ENCODE measurements at regions of chr22 and their contacts with region 1.

Region 1: DNA sequence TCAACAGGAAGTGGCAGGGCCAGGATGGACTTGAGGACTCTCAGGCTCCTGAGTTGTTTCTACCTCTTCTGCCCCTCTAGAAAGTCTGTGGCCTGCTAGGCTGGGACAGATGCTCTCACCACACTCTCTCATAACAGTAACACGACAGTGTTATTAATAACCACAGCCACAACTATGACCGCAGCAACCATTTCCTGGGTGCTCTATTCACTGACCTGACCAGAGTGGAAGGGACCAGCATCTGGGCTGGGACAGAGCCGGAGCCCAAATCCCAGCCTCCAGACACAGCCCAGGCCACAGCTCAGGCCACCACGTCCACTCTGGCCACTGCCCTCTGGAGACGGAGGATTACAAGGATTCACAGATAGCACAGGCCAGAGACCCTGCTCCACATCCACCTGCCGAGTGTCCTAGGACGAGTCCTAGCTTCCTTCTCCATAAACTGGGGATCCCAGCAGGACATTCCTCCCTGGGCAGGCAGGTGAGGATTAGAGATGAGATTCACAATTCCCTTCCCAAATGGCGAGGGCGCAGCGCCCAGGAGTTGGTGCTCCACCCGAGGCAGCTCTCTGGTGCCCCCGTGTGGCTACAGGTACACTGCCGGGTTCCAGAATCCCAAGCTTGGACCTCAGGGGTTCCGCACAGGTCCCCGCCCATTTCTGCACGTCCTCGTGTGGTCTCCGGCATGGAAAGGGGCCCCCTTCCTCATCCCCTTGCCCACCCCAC is 7.0 kb downstream of the PNPLA5 start:
- DNase-seq: peak in 1 of 2 donors; percentile 56
- ATAC-seq: peak; percentile 34 to 61 (median 34)
- H3K4me3 ChIP-seq: no peak overlapping the region
- H3K4me3 Mint-ChIP-seq: peak overlapping the region; percentile 37
- H3K27ac ChIP-seq: no peak overlapping the region
- H3K27ac Mint-ChIP-seq: no peak overlapping the region
- H3K4me1 ChIP-seq: peaks cover 13% of the 10 kb centered on the region
- H3K4me1 Mint-ChIP-seq: peaks cover 12 to 26% of the 10 kb centered on the region in 2 donors
- H3K27me3 ChIP-seq: no peaks in the 10 kb centered on the region
- H3K27me3 Mint-ChIP-seq: peaks cover 20 to 22% of the 10 kb centered on the region in 2 donors
- CTCF ChIP-seq: peak; percentile 20

Region 2: DNA sequence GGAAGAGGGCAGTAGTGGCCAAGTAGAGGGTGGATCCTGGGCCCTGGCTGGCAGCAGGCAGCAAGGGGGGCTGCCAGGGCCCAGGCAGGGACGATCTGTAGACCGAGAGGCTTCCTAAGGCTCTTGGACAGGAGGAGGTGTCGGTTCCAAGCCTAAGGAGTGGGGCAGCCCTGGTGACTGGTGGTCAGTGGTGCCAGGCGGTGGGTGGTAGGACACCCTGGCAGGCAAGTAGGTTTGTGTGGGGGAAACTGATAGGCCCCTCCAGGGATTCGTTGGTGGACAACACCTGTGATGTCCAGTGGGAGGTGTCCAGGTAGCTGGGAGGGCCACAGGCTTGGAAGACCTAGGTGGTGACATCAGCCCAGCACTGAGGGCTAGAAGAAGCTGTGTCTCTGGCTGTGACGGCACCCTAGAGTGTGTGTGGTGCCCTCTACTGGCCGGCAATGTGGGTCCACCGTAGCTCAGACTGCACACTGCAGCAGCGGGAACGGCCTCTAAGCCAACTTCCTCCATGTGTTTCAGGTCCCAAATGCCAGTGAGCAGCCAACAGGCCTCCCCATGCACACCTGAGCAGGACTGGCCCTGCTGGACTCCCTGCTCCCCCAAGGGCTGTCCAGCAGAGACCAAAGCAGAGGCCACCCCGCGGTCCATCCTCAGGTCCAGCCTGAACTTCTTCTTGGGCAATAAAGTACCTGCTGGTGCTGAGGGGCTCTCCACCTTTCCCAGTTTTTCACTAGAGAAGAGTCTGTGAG is 61.0 kb after region 1 on chr22:
- intact Hi-C with region 1: loop called (anchors 5 kb)
- DNase-seq: peak; percentile 51 to 80
- ATAC-seq: peak; percentile 82 to 98 (median 96)
- H3K4me3 ChIP-seq: no peak overlapping the region
- H3K4me3 Mint-ChIP-seq: no peak overlapping the region
- H3K27ac ChIP-seq: no peak overlapping the region
- H3K27ac Mint-ChIP-seq: no peak overlapping the region
- H3K4me1 ChIP-seq: no peaks in the 10 kb centered on the region
- H3K4me1 Mint-ChIP-seq: no peaks in the 10 kb centered on the region
- H3K27me3 ChIP-seq: no peaks in the 10 kb centered on the region
- H3K27me3 Mint-ChIP-seq: peaks cover 12 to 13% of the 10 kb centered on the region in 2 donors
- CTCF ChIP-seq: peak; percentile 73

Region 3: DNA sequence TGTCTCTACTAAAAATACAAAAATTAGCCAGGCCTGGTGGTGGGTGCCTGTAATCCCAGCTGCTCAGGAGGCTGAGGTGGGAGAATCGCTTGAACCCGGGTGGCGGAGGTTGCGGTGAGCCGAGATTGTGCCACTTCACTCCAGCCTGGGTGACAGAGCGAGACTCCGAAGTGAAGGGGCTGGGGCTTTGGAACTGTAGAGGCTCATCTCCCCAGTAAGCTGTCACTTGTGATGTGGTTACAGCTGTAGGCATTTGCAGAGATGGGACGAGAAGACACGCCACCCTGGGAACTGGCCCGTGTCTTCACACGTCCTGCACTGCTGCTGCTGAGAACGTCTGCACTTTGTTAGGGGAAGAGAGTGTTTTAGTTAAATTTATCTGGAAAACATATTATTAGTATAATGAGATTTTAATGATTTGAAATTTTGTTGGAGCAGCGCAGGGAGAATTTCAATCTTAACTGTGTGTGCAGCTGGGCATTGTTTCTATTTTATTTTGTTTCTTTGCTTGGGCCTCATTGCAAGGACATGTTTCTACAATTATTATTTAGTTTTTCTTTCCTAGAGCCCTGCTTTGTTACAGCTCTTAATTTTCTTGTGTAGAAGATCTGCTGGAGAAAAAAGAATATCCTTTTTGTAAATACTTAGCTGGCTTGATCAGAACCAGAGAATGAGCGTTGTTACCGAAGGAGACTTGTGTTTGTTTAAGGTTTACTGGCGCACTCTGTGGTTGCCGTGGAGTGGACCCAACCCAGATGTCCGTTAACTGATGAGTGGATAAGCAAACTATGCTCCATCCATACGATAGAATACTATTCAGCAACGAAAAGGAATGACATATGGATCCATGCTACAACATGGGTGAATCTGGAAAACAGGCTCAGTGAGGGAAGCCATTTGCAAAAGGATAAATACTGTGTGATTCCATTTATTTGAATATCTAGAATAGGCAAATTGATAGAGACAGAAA is 157.8 kb after region 1 on chr22:
- intact Hi-C with region 1: no loop called
- DNase-seq: no peak
- ATAC-seq: no peak
- H3K4me3 ChIP-seq: no peak overlapping the region
- H3K4me3 Mint-ChIP-seq: no peak overlapping the region
- H3K27ac ChIP-seq: no peak overlapping the region
- H3K27ac Mint-ChIP-seq: no peak overlapping the region
- H3K4me1 ChIP-seq: no peaks in the 10 kb centered on the region
- H3K4me1 Mint-ChIP-seq: no peaks in the 10 kb centered on the region
- H3K27me3 ChIP-seq: no peaks in the 10 kb centered on the region
- H3K27me3 Mint-ChIP-seq: peaks cover 0 to 4% of the 10 kb centered on the region in 2 donors
- CTCF ChIP-seq: no peak